ENCODE measurements at regions of chr17 and their contacts with region 1.

Region 1: DNA sequence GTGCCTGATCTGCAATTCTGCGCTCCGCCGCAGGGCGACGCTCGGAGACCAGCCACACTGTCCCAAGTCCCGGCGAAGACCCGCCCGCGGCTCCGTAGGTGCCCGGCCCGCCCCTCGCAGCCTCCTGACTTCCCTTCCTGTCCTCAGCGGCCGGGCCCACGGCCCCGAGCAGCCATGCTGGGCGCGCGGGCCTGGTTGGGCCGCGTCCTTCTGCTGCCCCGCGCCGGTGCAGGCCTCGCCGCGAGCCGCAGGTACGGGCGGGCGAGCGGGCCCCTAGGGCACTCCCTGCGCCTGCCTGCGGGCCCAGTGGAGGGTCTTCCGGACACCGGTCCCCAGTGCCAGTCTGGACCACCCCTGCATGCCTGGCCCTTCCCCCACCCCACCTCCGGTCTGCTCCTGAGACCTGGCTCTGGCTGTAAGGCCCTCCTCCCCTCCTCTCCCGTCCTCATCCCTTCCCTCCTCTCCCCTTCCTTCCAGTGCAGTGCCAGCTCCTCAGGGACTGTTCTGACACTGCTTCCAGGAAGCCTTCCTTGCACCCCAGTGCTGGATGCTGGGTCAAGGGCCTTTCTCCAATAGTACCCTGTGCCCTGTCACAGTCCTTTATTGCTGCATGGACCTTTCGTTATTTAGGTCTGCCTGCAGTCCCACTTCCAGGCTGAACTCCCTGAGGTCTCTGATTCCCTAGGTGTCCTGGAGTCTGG is at the start of gene SPATA20:
- DNase-seq: peak; percentile 99
- H3K4me3 ChIP-seq: peak within 1 kb of the TSS; percentile 70 to 76
- H3K27ac ChIP-seq: peak within 1 kb of the TSS in 1 of 2 experiments; percentile 78; a peak in 2 of 4 replicates
- H3K4me1 ChIP-seq: peaks cover 7 to 30% of the 10 kb centered on the region in 2 experiments; a peak in 3 of 4 replicates
- H3K27me3 ChIP-seq: no peaks in the 10 kb centered on the region
- CTCF ChIP-seq: peak; percentile 99
- EP300 ChIP-seq: 0 out of 4 replicates have a peak, but pooled peaks of 1 of the 2 experiments have one; percentile 22
- RAD21 ChIP-seq: peak; percentile 100
- polyA plus RNA-seq, gene SPATA20: 92.0 and 106 TPM in 2 replicates

Region 2: GRCh38 chr17:50493744-50494143 is 53.4 kb before region 1 on chr17:
- CTCF ChIA-PET with region 1: interaction called, 11 read pairs
- POLR2A ChIA-PET with region 1: interaction called, 3 read pairs
- DNase-seq: no peak
- H3K4me3 ChIP-seq: no peak overlapping the region
- H3K27ac ChIP-seq: no peak overlapping the region
- H3K4me1 ChIP-seq: no peaks in the 10 kb centered on the region
- H3K27me3 ChIP-seq: no peaks in the 10 kb centered on the region
- CTCF ChIP-seq: no peak
- EP300 ChIP-seq: no peak
- RAD21 ChIP-seq: no peak

Region 3: GRCh38 chr17:50583641-50584040 is 36.5 kb after region 1 on chr17:
- CTCF ChIA-PET with region 1: interaction called, 22 read pairs
- POLR2A ChIA-PET with region 1: no interaction called
- DNase-seq: no peak
- H3K4me3 ChIP-seq: no peak overlapping the region
- H3K27ac ChIP-seq: no peak overlapping the region
- H3K4me1 ChIP-seq: peaks cover 0 to 36% of the 10 kb centered on the region in 2 experiments; a peak in 1 of 4 replicates
- H3K27me3 ChIP-seq: peaks cover 21% of the 10 kb centered on the region
- CTCF ChIP-seq: no peak
- EP300 ChIP-seq: no peak
- RAD21 ChIP-seq: no peak

Region 4: GRCh38 chr17:50626037-50626574 is 78.9 kb after region 1 on chr17:
- CTCF ChIA-PET with region 1: interaction called, 1,212 read pairs
- POLR2A ChIA-PET with region 1: interaction called, 21 read pairs
- DNase-seq: peak; percentile 93
- H3K4me3 ChIP-seq: no peak overlapping the region; a peak in 1 of 4 replicates
- H3K27ac ChIP-seq: no peak overlapping the region
- H3K4me1 ChIP-seq: peaks cover 3 to 40% of the 10 kb centered on the region in 2 experiments; a peak in 3 of 4 replicates
- H3K27me3 ChIP-seq: no peaks in the 10 kb centered on the region
- CTCF ChIP-seq: peak; percentile 96
- EP300 ChIP-seq: no peak
- RAD21 ChIP-seq: peak; percentile 98

Region 5: DNA sequence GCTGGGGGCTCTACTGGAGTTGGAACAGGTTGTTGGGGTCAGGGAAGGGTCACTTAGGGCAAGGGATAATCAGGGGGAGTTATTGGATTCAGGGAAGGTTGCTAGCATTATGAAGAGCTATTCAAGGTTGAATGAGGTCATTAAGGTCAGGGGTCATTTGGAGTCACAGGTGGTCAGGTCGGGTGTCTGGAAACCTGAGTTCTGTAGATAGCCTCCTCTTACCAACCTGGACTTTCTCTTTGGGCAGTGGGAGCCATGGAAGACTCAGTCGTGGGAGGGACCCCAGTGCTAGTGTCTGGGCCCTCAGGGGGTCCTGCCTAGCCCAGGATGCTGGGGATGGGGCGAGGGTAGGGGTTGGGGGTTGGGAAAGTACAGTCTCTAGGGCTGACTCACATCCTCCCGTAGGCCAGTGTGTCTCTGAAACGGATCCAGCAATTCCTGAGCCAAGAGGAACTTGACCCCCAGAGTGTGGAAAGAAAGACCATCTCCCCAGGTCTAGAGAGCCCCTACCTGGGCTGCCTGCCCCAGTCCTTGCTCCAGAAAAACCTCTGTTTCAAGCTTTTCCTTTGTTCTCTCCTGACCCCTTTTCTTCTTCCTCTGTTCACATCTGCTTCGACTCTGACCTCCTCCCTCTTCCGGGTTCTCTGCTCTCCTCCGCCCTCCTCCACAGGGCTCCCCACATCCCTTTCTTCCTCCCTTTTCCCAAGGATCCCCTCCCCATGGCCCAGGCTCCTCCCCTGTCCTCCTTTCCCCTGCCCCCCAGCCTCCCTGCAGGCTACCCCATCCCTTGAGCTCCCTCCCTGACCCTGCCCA is 121.0 kb after region 1 on chr17:
- CTCF ChIA-PET with region 1: interaction called, 32 read pairs
- POLR2A ChIA-PET with region 1: no interaction called
- DNase-seq: no peak
- H3K4me3 ChIP-seq: no peak overlapping the region
- H3K27ac ChIP-seq: peak overlapping the region in 1 of 2 experiments; percentile 42; a peak in 2 of 4 replicates
- H3K4me1 ChIP-seq: peaks cover 0 to 31% of the 10 kb centered on the region in 2 experiments; a peak in 3 of 4 replicates
- H3K27me3 ChIP-seq: no peaks in the 10 kb centered on the region
- CTCF ChIP-seq: no peak
- EP300 ChIP-seq: peak in 1 of 2 experiments; percentile 42; a peak in 1 of 4 replicates
- RAD21 ChIP-seq: no peak

Region 6: GRCh38 chr17:50765454-50766221 is 218.5 kb after region 1 on chr17:
- CTCF ChIA-PET with region 1: interaction called, 14 read pairs
- POLR2A ChIA-PET with region 1: no interaction called
- DNase-seq: no peak
- H3K4me3 ChIP-seq: no peak overlapping the region
- H3K27ac ChIP-seq: peak overlapping the region in 1 of 2 experiments; percentile 7; a peak in 1 of 4 replicates
- H3K4me1 ChIP-seq: peaks cover 0 to 24% of the 10 kb centered on the region in 2 experiments; a peak in 2 of 4 replicates
- H3K27me3 ChIP-seq: no peaks in the 10 kb centered on the region
- CTCF ChIP-seq: no peak
- EP300 ChIP-seq: no peak
- RAD21 ChIP-seq: no peak